PC-9 (cell line): ENCODE measurements at regions of chr19 and their contacts with region 1.

Region 1: DNA sequence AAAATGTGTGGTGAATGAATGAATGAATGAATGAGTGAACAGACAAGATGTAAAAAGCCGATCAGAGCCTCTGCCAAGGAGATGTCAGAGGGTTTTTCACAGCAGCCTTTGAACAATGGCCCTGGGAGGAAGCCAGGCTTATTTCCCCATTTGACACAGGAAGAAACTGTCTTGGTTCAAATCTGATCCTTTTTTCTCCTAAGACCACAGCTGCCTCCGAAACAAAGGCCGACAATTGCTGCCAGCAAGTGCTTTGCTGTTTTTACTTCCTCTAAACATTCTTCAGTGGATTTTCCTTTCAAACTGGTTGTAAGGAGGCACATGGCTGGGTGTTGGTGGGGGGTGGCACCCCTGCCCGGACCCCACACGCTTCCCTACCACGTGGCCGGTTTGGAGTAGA is 44.2 kb upstream of the HOMER3 start:
- DNase-seq: no peak
- H3K4me3 ChIP-seq: no peak overlapping the region
- H3K27ac ChIP-seq: no peak overlapping the region
- H3K4me1 ChIP-seq: no peaks in the 10 kb centered on the region
- H3K27me3 ChIP-seq: no peaks in the 10 kb centered on the region
- CTCF ChIP-seq: no peak

Region 2: DNA sequence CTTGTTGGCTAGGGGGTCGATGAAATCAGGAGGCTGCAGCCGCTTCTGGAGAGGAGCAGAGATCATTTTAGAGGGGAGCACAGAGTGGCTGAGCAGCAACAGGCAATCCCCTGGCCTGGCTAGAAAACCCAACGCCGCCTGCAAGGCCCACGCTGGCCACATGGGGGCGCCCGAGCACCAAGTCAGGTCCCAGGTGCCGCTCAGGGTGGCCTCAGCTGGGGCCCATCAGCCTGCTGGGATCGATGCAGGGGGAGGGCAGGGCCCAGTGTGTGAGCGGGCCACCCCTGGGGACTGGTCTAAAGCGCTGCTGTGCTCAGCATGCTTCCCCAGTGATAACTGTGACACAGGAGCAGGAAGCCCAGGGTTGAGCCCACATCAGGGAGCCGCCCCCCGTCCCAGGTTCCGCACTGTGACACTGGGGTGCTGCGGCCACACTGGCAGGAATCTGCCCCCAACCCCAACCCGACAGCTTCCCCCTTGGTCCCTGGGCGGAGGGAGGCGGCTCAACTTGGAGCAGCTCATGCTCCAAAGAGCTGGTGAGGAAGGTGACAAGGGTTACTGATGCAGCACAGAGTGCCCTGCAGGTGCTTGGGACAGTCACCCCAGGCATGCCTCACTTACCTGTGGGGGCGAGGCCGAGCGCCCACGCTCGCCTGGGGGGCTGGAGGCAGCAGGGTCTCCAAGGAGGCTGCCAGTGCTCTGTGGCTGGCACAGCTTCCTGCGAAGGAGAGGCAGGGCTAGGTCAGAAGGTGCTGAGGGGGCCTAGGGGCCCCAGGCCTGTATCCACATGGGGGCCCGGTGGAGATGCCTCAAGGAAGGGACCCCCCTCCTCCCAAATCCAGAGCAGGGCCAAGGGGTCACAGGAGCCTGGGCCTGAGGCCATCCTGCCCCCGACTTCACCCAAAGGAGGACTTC is 534.1 kb before region 1 on chr19:
- CTCF ChIA-PET with region 1: no interaction called
- POLR2A ChIA-PET with region 1: no interaction called
- intact Hi-C with region 1: loop called (anchors 10 kb)
- DNase-seq: peak; percentile 54 to 83
- H3K4me3 ChIP-seq: no peak overlapping the region
- H3K27ac ChIP-seq: no peak overlapping the region
- H3K4me1 ChIP-seq: peaks cover 17% of the 10 kb centered on the region
- H3K27me3 ChIP-seq: no peaks in the 10 kb centered on the region
- CTCF ChIP-seq: peak; percentile 99

Region 3: DNA sequence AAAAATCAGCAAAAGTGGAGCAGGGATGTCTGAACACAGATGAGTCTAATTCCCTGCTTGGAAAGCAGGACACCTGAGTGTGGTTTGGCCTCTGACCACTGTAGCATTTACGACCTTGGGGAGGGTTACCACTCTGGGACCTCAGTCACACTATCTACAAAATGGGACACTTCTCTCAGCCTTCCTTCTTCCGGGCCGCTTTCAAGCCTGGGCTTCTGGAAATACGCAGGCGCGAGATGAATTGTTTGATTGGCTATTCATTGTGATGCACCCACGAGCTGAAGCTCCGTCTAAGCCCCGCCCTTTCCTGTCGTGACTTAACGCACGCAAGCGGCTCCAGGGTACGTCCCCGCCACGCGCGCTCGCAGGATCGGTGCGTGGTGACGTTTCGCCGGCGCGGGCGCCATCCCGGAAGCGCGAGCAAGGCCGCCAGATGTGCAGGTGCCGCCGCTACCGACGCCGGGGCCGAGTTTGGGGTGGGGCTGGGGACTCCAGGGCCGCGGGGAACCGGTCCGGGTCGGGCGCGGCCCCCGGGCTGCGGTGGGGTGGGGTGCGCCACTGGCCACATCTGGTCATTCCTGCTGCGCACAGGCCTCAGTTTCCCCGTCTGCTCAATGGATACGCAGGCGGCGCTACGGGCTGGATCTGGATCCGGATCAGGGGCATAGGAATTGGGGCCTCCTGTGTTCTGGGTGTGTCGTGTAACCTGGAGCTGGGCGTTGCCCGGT is 427.6 kb before region 1 on chr19 and contains the start of gene KXD1:
- CTCF ChIA-PET with region 1: interaction called, 10 read pairs
- POLR2A ChIA-PET with region 1: no interaction called
- intact Hi-C with region 1: no loop called
- DNase-seq: peak; percentile 93 to 94
- H3K4me3 ChIP-seq: peak within 1 kb of the TSS; percentile 95
- H3K27ac ChIP-seq: peak within 1 kb of the TSS; percentile 78
- H3K4me1 ChIP-seq: 0 out of 2 replicates have a peak, but pooled peaks cover 10% of the 10 kb centered on the region
- H3K27me3 ChIP-seq: no peaks in the 10 kb centered on the region
- CTCF ChIP-seq: 0 out of 2 replicates have a peak, but pooled peaks have one; percentile 17
- total RNA-seq, gene KXD1: 97.0 and 101 TPM in 2 replicates

Region 4: GRCh38 chr19:18895038-18895823 is 90.0 kb before region 1 on chr19:
- CTCF ChIA-PET with region 1: interaction called, 6 read pairs
- POLR2A ChIA-PET with region 1: no interaction called
- intact Hi-C with region 1: loop called (anchors 2 kb)
- DNase-seq: peak; percentile 68 to 71
- H3K4me3 ChIP-seq: peak overlapping the region; percentile 67
- H3K27ac ChIP-seq: no peak overlapping the region
- H3K4me1 ChIP-seq: no peaks in the 10 kb centered on the region
- H3K27me3 ChIP-seq: no peaks in the 10 kb centered on the region
- CTCF ChIP-seq: peak; percentile 70

Region 5: GRCh38 chr19:18919086-18919899 is 66.0 kb before region 1 on chr19 and contains the starts of genes COPE and DDX49:
- CTCF ChIA-PET with region 1: interaction called, 9 read pairs
- POLR2A ChIA-PET with region 1: no interaction called
- intact Hi-C with region 1: loop called (anchors 1 kb)
- DNase-seq: peak; percentile 95 to 100
- H3K4me3 ChIP-seq: peak within 1 kb of the TSS; percentile 72
- H3K27ac ChIP-seq: peak within 1 kb of the TSS; percentile 75
- H3K4me1 ChIP-seq: peaks cover 17% of the 10 kb centered on the region
- H3K27me3 ChIP-seq: no peaks in the 10 kb centered on the region
- CTCF ChIP-seq: no peak
- total RNA-seq, gene COPE: 190 and 221 TPM in 2 replicates
- total RNA-seq, gene DDX49: 41.2 and 46.3 TPM in 2 replicates

Region 6: DNA sequence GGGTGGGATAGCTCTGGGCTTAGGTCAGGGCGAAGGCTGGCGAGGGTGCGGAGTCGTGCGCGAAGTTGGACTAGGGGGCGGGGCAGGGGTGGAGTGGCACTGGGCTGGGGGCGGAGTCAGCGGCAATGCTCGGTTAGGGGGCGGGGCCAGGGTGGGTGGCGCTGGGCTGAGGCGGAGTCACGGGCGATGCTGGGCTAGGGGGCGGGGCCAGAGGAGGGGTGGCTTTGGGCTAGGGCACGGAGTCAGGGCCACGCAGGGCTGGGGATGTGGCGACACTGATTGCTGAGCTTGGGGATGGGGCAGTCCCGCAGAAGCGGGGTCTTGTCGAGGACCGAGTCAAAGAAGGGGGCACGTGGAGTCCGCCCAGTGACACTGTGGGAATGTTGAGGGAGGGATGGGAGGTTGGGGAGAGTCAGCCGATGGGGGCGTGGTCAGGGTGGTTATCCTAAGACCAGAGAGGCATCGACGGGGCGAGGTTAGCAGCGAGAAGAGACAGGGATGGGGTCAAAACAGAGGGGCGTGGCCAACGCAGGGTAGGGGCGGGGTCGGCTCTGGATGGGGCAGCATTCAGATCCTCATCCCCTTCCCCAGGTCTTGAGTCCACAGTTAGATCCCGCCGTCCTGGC is 52.9 kb before region 1 on chr19:
- CTCF ChIA-PET with region 1: no interaction called
- POLR2A ChIA-PET with region 1: interaction called, 14 read pairs
- intact Hi-C with region 1: no loop called
- DNase-seq: peak in 1 of 2 experiments; percentile 14
- H3K4me3 ChIP-seq: no peak overlapping the region
- H3K27ac ChIP-seq: no peak overlapping the region
- H3K4me1 ChIP-seq: no peaks in the 10 kb centered on the region
- H3K27me3 ChIP-seq: no peaks in the 10 kb centered on the region
- CTCF ChIP-seq: no peak

Region 7: GRCh38 chr19:18940769-18941407 is 44.4 kb before region 1 on chr19 and contains the start of gene HOMER3:
- CTCF ChIA-PET with region 1: no interaction called
- POLR2A ChIA-PET with region 1: no interaction called
- intact Hi-C with region 1: loop called (anchors 1 kb)
- DNase-seq: peak in 1 of 2 experiments; percentile 75
- H3K4me3 ChIP-seq: peak within 1 kb of the TSS; percentile 81
- H3K27ac ChIP-seq: no peak within 1 kb of the TSS
- H3K4me1 ChIP-seq: peaks cover 10% of the 10 kb centered on the region
- H3K27me3 ChIP-seq: no peaks in the 10 kb centered on the region
- CTCF ChIP-seq: no peak
- total RNA-seq, gene HOMER3: 55.7 and 62.5 TPM in 2 replicates